Calu3 (cell line): ENCODE measurements at regions of chr1 and their contacts with region 1.

Region 1: GRCh38 chr1:192954705-192955265 is 104.4 kb downstream of the UCHL5 start:
- DNase-seq: no peak
- H3K4me3 Mint-ChIP-seq: no peak overlapping the region
- H3K27ac Mint-ChIP-seq: no peak overlapping the region
- H3K4me1 Mint-ChIP-seq: no peaks in the 10 kb centered on the region
- H3K27me3 Mint-ChIP-seq: no peaks in the 10 kb centered on the region
- CTCF ChIP-seq: no peak

Region 2: DNA sequence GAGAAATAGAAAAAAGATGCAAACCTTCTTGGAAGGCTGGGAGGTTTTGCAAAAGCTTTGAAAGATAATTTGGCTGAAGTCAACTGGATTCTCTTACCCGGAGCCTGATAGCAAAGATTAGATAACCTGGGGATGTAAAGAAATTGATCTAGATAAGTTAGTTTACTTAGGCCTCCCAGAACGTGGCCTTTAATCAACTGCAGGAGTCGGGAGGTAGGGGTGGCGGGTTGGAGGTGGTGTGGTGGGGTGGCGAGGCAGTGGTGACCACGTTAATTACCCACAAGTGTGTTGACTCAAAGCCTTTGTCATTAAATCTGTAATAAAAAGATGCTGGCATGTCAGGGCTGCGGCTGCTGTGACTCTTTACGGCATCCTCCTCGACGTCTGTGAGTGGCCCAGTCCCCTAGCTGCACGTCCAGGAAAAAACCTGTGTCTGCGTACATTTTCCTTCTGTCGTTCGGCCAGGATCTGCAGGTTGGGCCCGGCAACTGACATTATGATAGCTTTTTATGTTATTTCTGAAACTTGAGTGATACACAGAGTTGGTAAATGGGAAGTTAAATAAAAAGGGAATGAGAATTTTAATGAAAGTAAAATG is 282.7 kb after region 1 on chr1:
- CTCF ChIA-PET with region 1: no interaction called
- intact Hi-C with region 1: loop called (anchors 5 kb)
- DNase-seq: no peak
- H3K4me3 Mint-ChIP-seq: no peak overlapping the region
- H3K27ac Mint-ChIP-seq: no peak overlapping the region
- H3K4me1 Mint-ChIP-seq: no peaks in the 10 kb centered on the region
- H3K27me3 Mint-ChIP-seq: no peaks in the 10 kb centered on the region
- CTCF ChIP-seq: no peak